CD4-positive, alpha-beta T cell (primary cell): ENCODE measurements at regions of chr1 and their contacts with region 1.

Region 1: DNA sequence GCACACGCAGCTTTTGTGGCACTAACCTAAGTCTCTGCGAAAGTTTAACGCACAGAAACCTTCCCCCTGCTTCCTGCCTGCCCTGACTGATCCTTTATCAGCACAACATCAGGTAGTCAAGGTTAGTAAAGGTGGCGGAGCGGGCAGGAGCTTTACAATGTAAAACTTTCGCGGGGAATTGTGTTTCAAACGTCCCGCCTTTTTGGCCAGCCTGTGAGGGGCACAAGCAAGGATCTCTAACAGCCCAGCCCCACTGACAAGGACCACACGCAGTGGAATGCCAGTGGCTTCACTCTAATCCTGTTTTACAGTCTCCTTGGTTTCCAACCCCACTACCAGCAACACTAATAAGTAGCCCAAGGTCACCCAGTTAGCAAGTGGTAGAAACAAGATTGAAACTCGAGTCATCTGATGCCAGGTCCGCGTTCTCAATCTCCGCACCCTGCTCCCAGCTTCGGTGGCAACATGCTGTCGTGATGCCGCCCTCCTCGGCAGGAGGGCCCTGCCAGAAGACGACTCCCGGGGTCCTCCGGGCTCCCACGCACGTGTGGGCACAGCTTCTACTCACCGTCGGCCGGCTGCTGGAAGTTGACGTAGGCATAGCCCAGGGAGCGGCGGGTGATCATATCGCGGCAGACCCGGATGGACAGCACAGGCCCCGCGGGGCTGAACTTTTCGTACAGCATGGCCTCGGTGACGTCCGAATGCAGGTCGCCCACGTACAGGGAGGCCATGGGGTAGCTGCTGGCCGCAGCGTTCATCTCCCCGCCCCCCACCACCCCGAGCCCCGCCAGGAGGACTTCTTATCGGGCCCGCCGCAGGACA is 1.2 kb downstream of the PABPC4 start:
- DNase-seq: peak in 13 of 14 experiments; percentile 12 to 72 (median 43)
- ATAC-seq: peak; percentile 61
- H3K4me3 ChIP-seq: peak overlapping the region; percentile 86
- H3K4me3 Mint-ChIP-seq: peak overlapping the region; percentile 94
- H3K27ac ChIP-seq: peak overlapping the region; percentile 57 to 60
- H3K27ac Mint-ChIP-seq: peak overlapping the region; percentile 87
- H3K4me1 ChIP-seq: peaks cover 37% of the 10 kb centered on the region
- H3K4me1 Mint-ChIP-seq: peaks cover 45% of the 10 kb centered on the region
- H3K27me3 ChIP-seq: no peaks in the 10 kb centered on the region
- H3K27me3 Mint-ChIP-seq: no peaks in the 10 kb centered on the region
- CTCF ChIP-seq: no peak

Region 2: GRCh38 chr1:38012363-38013226 is 1562.8 kb before region 1 on chr1 and contains the start of gene UTP11:
- CTCF ChIA-PET with region 1: no interaction called
- POLR2A ChIA-PET with region 1: no interaction called
- intact Hi-C with region 1: loop called in 1 of 2 experiments (anchors 10 kb)
- DNase-seq: peak; percentile 80 to 97 (median 85)
- ATAC-seq: peak; percentile 94
- H3K4me3 ChIP-seq: peak within 1 kb of the TSS; percentile 86
- H3K4me3 Mint-ChIP-seq: peak within 1 kb of the TSS; percentile 99
- H3K27ac ChIP-seq: peak within 1 kb of the TSS; percentile 75 to 83
- H3K27ac Mint-ChIP-seq: peak within 1 kb of the TSS; percentile 97
- H3K4me1 ChIP-seq: peaks cover 47% of the 10 kb centered on the region
- H3K4me1 Mint-ChIP-seq: peaks cover 39% of the 10 kb centered on the region
- H3K27me3 ChIP-seq: no peaks in the 10 kb centered on the region
- H3K27me3 Mint-ChIP-seq: no peaks in the 10 kb centered on the region
- CTCF ChIP-seq: no peak
- total RNA-seq, gene UTP11: 8.7 to 9.4 TPM

Region 3: GRCh38 chr1:38990738-38991639 is 584.4 kb before region 1 on chr1 and contains the start of gene AKIRIN1:
- CTCF ChIA-PET with region 1: no interaction called
- POLR2A ChIA-PET with region 1: no interaction called
- intact Hi-C with region 1: loop called in 1 of 2 experiments (anchors 10 kb)
- DNase-seq: peak; percentile 82 to 96 (median 92)
- ATAC-seq: peak; percentile 84
- H3K4me3 ChIP-seq: peak within 1 kb of the TSS; percentile 91
- H3K4me3 Mint-ChIP-seq: peak within 1 kb of the TSS; percentile 90
- H3K27ac ChIP-seq: peak within 1 kb of the TSS; percentile 83 to 89
- H3K27ac Mint-ChIP-seq: peak within 1 kb of the TSS; percentile 81
- H3K4me1 ChIP-seq: peaks cover 36% of the 10 kb centered on the region
- H3K4me1 Mint-ChIP-seq: peaks cover 43% of the 10 kb centered on the region
- H3K27me3 ChIP-seq: no peaks in the 10 kb centered on the region
- H3K27me3 Mint-ChIP-seq: no peaks in the 10 kb centered on the region
- CTCF ChIP-seq: no peak
- total RNA-seq, gene AKIRIN1: 108 to 112 TPM

Region 4: GRCh38 chr1:39408641-39409054 is 166.8 kb before region 1 on chr1:
- CTCF ChIA-PET with region 1: no interaction called
- POLR2A ChIA-PET with region 1: no interaction called
- intact Hi-C with region 1: loop called in 1 of 2 experiments (anchors 10 kb)
- DNase-seq: peak; percentile 61 to 96 (median 79)
- ATAC-seq: peak; percentile 83
- H3K4me3 ChIP-seq: peak overlapping the region; percentile 61
- H3K4me3 Mint-ChIP-seq: peak overlapping the region; percentile 77
- H3K27ac ChIP-seq: peak overlapping the region in 1 of 2 donors; percentile 21
- H3K27ac Mint-ChIP-seq: no peak overlapping the region
- H3K4me1 ChIP-seq: peaks cover 40% of the 10 kb centered on the region
- H3K4me1 Mint-ChIP-seq: peaks cover 66% of the 10 kb centered on the region
- H3K27me3 ChIP-seq: no peaks in the 10 kb centered on the region
- H3K27me3 Mint-ChIP-seq: no peaks in the 10 kb centered on the region
- CTCF ChIP-seq: no peak

Region 5: DNA sequence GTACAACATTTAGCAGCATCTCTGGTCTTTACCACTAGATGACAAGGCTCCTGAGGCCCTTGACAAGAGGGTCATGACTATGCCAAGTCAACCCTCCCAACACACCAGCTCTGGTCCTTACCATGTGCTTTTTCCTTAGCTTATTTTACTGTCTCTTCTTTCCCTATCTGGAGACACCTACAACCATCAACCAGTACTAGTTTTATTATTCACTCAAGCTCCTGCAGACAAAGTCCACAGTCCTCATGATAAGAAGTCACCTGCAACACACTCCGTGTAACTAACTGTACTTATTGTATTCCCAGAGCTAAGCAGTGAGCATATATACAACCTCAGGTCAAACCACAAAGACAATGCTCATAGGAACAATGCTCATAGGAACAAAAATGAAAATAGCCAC is 14.1 kb before region 1 on chr1:
- CTCF ChIA-PET with region 1: interaction called, 3 read pairs
- POLR2A ChIA-PET with region 1: interaction called, 14 read pairs
- intact Hi-C with region 1: loop called in 1 of 2 experiments (anchors 2 kb)
- DNase-seq: no peak
- ATAC-seq: no peak
- H3K4me3 ChIP-seq: no peak overlapping the region
- H3K4me3 Mint-ChIP-seq: no peak overlapping the region
- H3K27ac ChIP-seq: no peak overlapping the region
- H3K27ac Mint-ChIP-seq: peak overlapping the region; percentile 17
- H3K4me1 ChIP-seq: peaks cover 9% of the 10 kb centered on the region
- H3K4me1 Mint-ChIP-seq: peaks cover 20% of the 10 kb centered on the region
- H3K27me3 ChIP-seq: no peaks in the 10 kb centered on the region
- H3K27me3 Mint-ChIP-seq: no peaks in the 10 kb centered on the region
- CTCF ChIP-seq: no peak

Region 6: GRCh38 chr1:39672551-39672947 is 97.1 kb after region 1 on chr1:
- CTCF ChIA-PET with region 1: no interaction called
- POLR2A ChIA-PET with region 1: no interaction called
- intact Hi-C with region 1: no loop called
- DNase-seq: peak in 11 of 14 experiments; percentile 27 to 69 (median 42)
- ATAC-seq: peak; percentile 39
- H3K4me3 ChIP-seq: peak overlapping the region; percentile 28
- H3K4me3 Mint-ChIP-seq: peak overlapping the region; percentile 76
- H3K27ac ChIP-seq: no peak overlapping the region
- H3K27ac Mint-ChIP-seq: no peak overlapping the region
- H3K4me1 ChIP-seq: peaks cover 17% of the 10 kb centered on the region
- H3K4me1 Mint-ChIP-seq: peaks cover 8% of the 10 kb centered on the region
- H3K27me3 ChIP-seq: peaks cover 45 to 46% of the 10 kb centered on the region in 2 experiments
- H3K27me3 Mint-ChIP-seq: peaks cover 43% of the 10 kb centered on the region
- CTCF ChIP-seq: peak; percentile 63

Region 7: GRCh38 chr1:39738622-39739366 is 163.4 kb after region 1 on chr1 and contains the start of gene PPIE:
- CTCF ChIA-PET with region 1: interaction called, 9 read pairs
- POLR2A ChIA-PET with region 1: interaction called, 13 read pairs
- intact Hi-C with region 1: no loop called
- DNase-seq: peak; percentile 89 to 97 (median 95)
- ATAC-seq: peak; percentile 98
- H3K4me3 ChIP-seq: peak within 1 kb of the TSS; percentile 96
- H3K4me3 Mint-ChIP-seq: peak within 1 kb of the TSS; percentile 96
- H3K27ac ChIP-seq: peak within 1 kb of the TSS; percentile 71 to 81
- H3K27ac Mint-ChIP-seq: peak within 1 kb of the TSS; percentile 87
- H3K4me1 ChIP-seq: peaks cover 21% of the 10 kb centered on the region
- H3K4me1 Mint-ChIP-seq: peaks cover 34% of the 10 kb centered on the region
- H3K27me3 ChIP-seq: peaks cover 8 to 19% of the 10 kb centered on the region in 2 experiments
- H3K27me3 Mint-ChIP-seq: peaks cover 28% of the 10 kb centered on the region
- CTCF ChIP-seq: no peak
- total RNA-seq, gene PPIE: 45.0 to 46.7 TPM

Region 8: DNA sequence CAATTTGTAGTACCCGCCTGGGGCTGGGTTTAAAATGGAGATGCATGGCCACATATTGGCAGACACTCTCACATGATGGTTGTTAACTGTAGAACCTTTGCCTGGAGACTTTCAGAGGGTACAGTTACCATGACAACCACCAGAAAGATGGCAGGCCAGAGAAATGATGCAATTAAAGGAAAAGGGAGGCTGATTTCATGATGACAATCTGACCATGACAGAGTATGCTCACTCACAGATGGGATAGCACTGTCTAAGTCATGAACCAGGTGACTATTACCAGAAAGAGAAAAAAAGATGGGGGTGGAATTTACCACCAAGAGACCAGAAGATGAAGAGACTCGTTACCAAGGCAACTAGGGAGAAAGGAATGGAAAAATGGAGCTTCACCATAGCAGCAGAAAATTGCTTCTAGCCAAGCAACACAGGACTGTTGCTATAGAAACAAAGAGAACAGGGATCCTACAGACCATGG is 311.4 kb after region 1 on chr1:
- CTCF ChIA-PET with region 1: no interaction called
- POLR2A ChIA-PET with region 1: no interaction called
- intact Hi-C with region 1: loop called in 1 of 2 experiments (anchors 10 kb)
- DNase-seq: no peak
- ATAC-seq: no peak
- H3K4me3 ChIP-seq: no peak overlapping the region
- H3K4me3 Mint-ChIP-seq: no peak overlapping the region
- H3K27ac ChIP-seq: no peak overlapping the region
- H3K27ac Mint-ChIP-seq: no peak overlapping the region
- H3K4me1 ChIP-seq: peaks cover 16% of the 10 kb centered on the region
- H3K4me1 Mint-ChIP-seq: peaks cover 18% of the 10 kb centered on the region
- H3K27me3 ChIP-seq: peaks cover 2 to 4% of the 10 kb centered on the region in 2 experiments
- H3K27me3 Mint-ChIP-seq: peaks cover 9% of the 10 kb centered on the region
- CTCF ChIP-seq: no peak